Activated naive CD4-positive, alpha-beta T cell treated with anti-CD3 and anti-CD28 coated beads for 36 hours (primary cell): ENCODE measurements at regions of chr5 and their contacts with region 1.

Region 1: DNA sequence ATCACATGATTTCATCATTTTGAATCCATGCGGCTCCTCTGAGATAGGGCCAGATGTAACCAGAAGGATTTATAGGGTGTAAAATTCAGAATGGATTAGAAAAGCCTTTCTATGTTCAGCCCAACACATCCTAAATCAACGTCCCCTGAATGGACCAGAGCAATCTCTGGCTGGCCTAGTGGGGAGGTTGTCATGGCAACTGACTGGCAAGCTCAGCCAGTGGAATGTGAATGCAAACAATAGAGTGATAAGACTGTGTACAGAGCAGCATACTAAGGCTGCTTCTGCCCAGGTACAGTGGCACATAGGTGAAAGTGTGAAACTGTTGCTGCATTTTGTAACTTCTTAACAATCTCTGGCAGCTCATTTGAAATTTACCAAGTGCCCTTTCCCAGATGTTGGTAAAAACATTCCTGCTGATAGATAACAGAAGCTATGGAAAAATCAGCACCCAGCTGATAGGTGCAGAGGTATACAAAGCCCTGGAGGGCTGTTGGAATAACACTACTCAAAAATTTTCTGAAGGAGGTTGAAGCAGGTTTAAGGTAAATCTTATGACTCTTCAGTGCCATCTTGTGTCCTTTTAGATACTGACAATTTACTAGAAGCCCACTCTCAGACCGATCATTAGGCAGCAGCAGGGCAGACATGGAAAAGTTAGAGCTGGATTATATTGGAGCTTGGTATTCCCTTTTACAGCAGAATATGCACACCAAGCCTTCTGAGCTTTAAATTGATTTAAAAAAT is 267.2 kb downstream of the RAB3C start:
- DNase-seq: no peak
- H3K4me3 Mint-ChIP-seq: no peak overlapping the region
- H3K27ac Mint-ChIP-seq: no peak overlapping the region
- H3K4me1 Mint-ChIP-seq: no peaks in the 10 kb centered on the region
- H3K27me3 Mint-ChIP-seq: peaks cover 3% of the 10 kb centered on the region

Region 2: DNA sequence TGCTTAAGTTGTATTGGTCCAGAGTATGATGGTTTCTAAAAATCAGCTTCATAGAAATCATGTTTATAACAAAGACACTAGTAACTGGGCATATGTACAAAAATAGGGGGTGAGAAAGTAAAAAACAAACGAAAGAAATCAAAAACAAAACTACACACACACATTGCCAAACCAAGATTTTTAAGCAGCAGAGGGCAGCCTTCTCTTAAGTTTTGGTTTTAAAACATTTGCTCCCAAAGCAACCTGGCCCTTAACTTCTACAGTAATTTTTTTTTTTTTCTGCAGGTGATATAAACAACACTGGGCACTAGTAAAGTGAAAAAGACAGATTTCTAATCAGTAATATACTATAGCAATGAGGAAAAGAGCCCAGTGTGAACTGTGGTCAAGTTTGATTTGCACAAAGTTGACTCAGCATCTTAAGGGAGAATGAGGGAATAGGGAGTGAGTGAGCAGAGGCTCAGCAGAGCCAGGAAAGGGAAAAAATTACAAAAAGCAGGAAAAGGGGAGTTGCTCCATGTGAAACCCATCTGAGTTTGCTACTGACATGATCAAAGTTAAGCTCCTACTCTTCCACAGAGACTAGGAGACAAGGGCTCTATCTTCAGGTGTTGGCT is 372.2 kb before region 1 on chr5:
- CTCF ChIA-PET with region 1: interaction called, 8 read pairs
- intact Hi-C with region 1: loop called (anchors 1 kb)
- DNase-seq: no peak
- H3K4me3 Mint-ChIP-seq: no peak overlapping the region
- H3K27ac Mint-ChIP-seq: no peak overlapping the region
- H3K4me1 Mint-ChIP-seq: no peaks in the 10 kb centered on the region
- H3K27me3 Mint-ChIP-seq: peaks cover 7% of the 10 kb centered on the region

Region 3: DNA sequence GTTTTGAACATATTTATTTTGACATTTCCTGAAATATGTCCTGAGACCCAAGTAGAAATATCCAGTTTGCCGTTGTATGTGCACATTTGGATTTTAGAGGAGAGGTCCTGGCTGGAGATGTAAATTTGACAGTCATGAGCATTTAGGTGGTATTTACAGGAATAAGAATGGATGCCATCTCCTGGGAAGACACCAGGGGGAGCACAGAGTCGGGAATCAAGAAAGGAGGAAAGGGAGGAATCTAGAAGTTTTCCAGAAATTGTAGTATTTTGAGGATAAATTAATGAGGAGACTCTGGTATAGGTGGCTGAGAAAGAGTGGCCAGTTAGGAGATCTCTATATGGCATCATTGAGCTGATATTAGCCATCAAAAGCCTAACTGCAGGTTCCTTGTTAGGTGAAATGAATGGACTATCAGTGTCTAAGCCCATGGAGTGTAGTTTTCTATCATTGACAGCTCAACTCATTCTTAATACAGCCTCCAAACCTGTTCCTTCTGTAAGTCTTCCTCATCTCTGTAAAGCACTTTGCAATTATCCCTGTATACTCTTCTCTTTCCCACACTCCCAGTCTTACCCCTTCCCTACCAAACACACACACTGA is 351.7 kb before region 1 on chr5:
- CTCF ChIA-PET with region 1: interaction called, 21 read pairs
- intact Hi-C with region 1: loop called (anchors 1 kb)
- DNase-seq: no peak
- H3K4me3 Mint-ChIP-seq: no peak overlapping the region
- H3K27ac Mint-ChIP-seq: no peak overlapping the region
- H3K4me1 Mint-ChIP-seq: peaks cover 7% of the 10 kb centered on the region
- H3K27me3 Mint-ChIP-seq: peaks cover 8% of the 10 kb centered on the region

Region 4: DNA sequence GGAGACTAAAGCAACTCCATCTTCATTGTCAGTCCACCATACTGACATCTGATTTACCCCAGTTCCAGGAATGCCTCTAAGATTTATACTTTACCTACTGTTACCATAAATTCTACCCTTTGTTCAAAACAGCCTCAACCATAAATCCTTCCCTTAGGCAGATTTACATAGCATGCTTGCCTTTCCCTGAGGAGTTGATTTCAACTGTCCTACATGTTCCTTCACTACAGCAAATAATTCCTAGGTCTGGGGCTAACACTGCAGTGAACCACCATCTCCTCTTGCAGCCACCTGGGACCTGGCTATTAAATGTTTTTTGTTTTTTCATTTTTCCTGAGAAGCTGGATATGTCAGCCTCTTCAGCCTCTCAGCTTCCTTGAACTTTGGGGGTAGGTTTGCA is 1210.3 kb after region 1 on chr5:
- CTCF ChIA-PET with region 1: no interaction called
- intact Hi-C with region 1: no loop called
- DNase-seq: no peak
- H3K4me3 Mint-ChIP-seq: no peak overlapping the region
- H3K27ac Mint-ChIP-seq: no peak overlapping the region
- H3K4me1 Mint-ChIP-seq: no peaks in the 10 kb centered on the region
- H3K27me3 Mint-ChIP-seq: no peaks in the 10 kb centered on the region